Right ventricle myocardium inferior (tissue), 1 donor: ENCODE measurements at regions of chr4 and their contacts with region 1.

Region 1: GRCh38 chr4:139229534-139230039 is 50.4 kb downstream of the MGARP start:
- DNase-seq: no peak
- ATAC-seq: no peak

Region 2: DNA sequence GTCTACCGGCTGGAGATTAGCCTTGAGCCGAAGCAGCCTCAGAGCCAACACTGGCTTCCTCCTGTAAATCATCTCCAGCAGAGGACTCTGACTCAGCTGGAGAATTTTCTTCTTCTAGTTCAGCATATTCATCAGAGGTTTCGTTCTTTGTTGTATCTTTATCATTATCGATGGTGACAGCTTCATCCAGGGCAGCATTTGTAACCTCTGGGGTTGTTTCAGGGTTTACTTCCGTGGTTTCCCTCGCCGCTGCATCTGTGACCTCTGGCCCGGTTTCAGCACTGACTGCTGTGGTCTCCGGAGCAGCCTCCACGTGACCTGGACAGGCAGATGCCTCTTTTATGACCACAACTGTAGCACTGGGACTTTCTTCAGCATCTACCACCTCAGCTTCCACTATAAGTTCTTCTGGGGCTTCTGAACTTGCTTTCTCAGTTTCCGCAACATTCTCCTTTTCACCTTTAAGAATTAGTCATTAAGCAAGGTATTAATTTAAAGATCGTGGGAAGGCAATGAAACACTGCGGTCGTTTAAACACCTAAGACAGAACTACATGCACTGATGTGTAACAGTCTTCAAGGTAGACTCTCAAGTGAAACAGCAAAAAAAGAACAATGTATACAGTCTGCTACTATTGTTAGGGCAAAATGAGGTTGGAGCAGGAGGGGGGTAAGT is 37.1 kb after region 1 on chr4:
- intact Hi-C with region 1: no loop called
- DNase-seq: peak; percentile 86
- ATAC-seq: peak; percentile 89

Region 3: GRCh38 chr4:139295206-139295941 is 65.8 kb after region 1 on chr4:
- intact Hi-C with region 1: loop called (anchors 5 kb)
- DNase-seq: peak; percentile 100
- ATAC-seq: peak; percentile 98